ENCODE measurements at regions of chr2 and their contacts with region 1.

Region 1: GRCh38 chr2:171999604-172000469 is at the start of gene METAP1D:
- DNase-seq: peak; percentile 78 to 85 (median 83)
- H3K4me3 ChIP-seq: peak within 1 kb of the TSS; percentile 67 to 88
- H3K4me3 Mint-ChIP-seq: peak within 1 kb of the TSS; percentile 88 to 98 (median 93)
- H3K27ac ChIP-seq: peak within 1 kb of the TSS; percentile 34
- H3K27ac Mint-ChIP-seq: peak within 1 kb of the TSS; percentile 47 to 95 (median 93)
- H3K4me1 ChIP-seq: peaks cover 12% of the 10 kb centered on the region
- H3K4me1 Mint-ChIP-seq: peaks cover 8 to 20% (median 14%) of the 10 kb centered on the region in 4 donors
- H3K27me3 ChIP-seq: no peaks in the 10 kb centered on the region
- H3K27me3 Mint-ChIP-seq: peaks cover under 1 to 6% of the 10 kb centered on the region in 2 donors
- total RNA-seq, gene METAP1D: 7.2 to 7.3 TPM

Region 2: DNA sequence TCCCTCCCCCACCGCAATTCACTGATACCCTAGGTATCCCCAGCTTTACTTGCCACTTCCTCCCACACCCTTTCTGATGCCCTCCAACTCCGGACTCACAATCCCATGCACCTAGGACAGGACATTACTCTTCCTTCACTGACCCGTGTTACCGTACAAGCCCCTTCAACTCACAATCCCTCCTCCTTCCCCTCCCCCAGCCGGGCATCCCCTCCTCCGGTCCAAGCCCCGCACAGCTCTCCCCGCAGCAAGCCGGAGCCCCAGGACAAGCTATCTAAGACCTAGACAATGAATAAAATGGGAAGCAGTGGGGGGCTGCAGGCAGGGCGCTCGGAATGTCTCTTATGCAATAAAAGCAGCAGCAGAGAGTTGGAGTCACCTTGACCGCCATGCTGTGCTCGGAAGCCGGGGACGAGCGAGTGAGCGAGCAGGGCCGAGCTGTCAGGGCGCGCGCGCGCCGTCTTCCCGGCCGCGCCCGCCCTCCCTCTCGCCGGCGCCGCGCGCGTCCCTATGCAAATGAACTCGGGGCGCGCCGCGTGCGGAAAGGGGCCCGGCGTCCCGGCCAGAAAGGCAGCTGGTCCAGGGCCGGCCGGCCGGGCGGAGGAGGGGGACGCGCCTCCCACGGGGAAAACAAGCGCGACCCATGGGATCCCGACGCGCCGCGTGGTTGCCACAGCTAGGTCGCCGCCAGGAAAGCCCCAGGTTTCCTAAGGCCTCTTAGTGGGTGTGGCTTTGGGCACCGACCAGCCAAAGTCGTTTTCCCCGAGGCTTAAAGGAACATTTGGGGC is 105.8 kb before region 1 on chr2 and contains the start of gene SLC25A12:
- CTCF ChIA-PET with region 1: no interaction called
- POLR2A ChIA-PET with region 1: no interaction called
- intact Hi-C with region 1: loop called (anchors 1 kb)
- DNase-seq: peak; percentile 52 to 70 (median 61)
- H3K4me3 ChIP-seq: peak within 1 kb of the TSS; percentile 74 to 87
- H3K4me3 Mint-ChIP-seq: peak within 1 kb of the TSS; percentile 93 to 99 (median 98)
- H3K27ac ChIP-seq: peak within 1 kb of the TSS; percentile 66
- H3K27ac Mint-ChIP-seq: peak within 1 kb of the TSS; percentile 77 to 97 (median 92)
- H3K4me1 ChIP-seq: peaks cover 36% of the 10 kb centered on the region
- H3K4me1 Mint-ChIP-seq: peaks cover 28 to 45% (median 30%) of the 10 kb centered on the region in 4 donors
- H3K27me3 ChIP-seq: no peaks in the 10 kb centered on the region
- H3K27me3 Mint-ChIP-seq: peaks cover 0 to 2% of the 10 kb centered on the region in 2 donors
- total RNA-seq, gene SLC25A12: 14.6 to 14.9 TPM

Measured in CD4-positive, alpha-beta memory T cell (primary cell).